ENCODE measurements at regions of chr4 and their contacts with region 1.

Region 1: GRCh38 chr4:82851885-82852750 is 38.8 kb downstream of the SEC31A start:
- DNase-seq: no peak
- ATAC-seq: peak; percentile 53
- H3K4me3 Mint-ChIP-seq: no peak overlapping the region
- H3K27ac Mint-ChIP-seq: no peak overlapping the region
- H3K4me1 Mint-ChIP-seq: peaks cover 5% of the 10 kb centered on the region
- H3K27me3 Mint-ChIP-seq: no peaks in the 10 kb centered on the region

Region 2: GRCh38 chr4:82865592-82865991 is 13.5 kb after region 1 on chr4:
- CTCF ChIA-PET with region 1: interaction called, 33 read pairs
- DNase-seq: peak; percentile 49
- ATAC-seq: peak; percentile 73
- H3K4me3 Mint-ChIP-seq: peak overlapping the region; percentile 7
- H3K27ac Mint-ChIP-seq: peak overlapping the region; percentile 86
- H3K4me1 Mint-ChIP-seq: peaks cover 39% of the 10 kb centered on the region
- H3K27me3 Mint-ChIP-seq: no peaks in the 10 kb centered on the region

Region 3: GRCh38 chr4:82900331-82901128 is 48.4 kb after region 1 on chr4 and contains the start of gene THAP9:
- CTCF ChIA-PET with region 1: interaction called, 32 read pairs
- DNase-seq: peak; percentile 100
- ATAC-seq: peak; percentile 91
- H3K4me3 Mint-ChIP-seq: no peak within 1 kb of the TSS
- H3K27ac Mint-ChIP-seq: no peak within 1 kb of the TSS
- H3K4me1 Mint-ChIP-seq: peaks cover 46% of the 10 kb centered on the region
- H3K27me3 Mint-ChIP-seq: peaks cover 5% of the 10 kb centered on the region
- total RNA-seq, gene THAP9: 1.9 to 2.4 TPM

Region 4: GRCh38 chr4:83054928-83055327 is 202.8 kb after region 1 on chr4:
- CTCF ChIA-PET with region 1: no interaction called
- DNase-seq: no peak
- ATAC-seq: no peak
- H3K4me3 Mint-ChIP-seq: no peak overlapping the region
- H3K27ac Mint-ChIP-seq: no peak overlapping the region
- H3K4me1 Mint-ChIP-seq: peaks cover 2% of the 10 kb centered on the region
- H3K27me3 Mint-ChIP-seq: no peaks in the 10 kb centered on the region

Region 5: GRCh38 chr4:83174844-83175414 is 322.8 kb after region 1 on chr4:
- CTCF ChIA-PET with region 1: no interaction called
- DNase-seq: no peak
- ATAC-seq: no peak
- H3K4me3 Mint-ChIP-seq: no peak overlapping the region
- H3K27ac Mint-ChIP-seq: no peak overlapping the region
- H3K4me1 Mint-ChIP-seq: peaks cover 10% of the 10 kb centered on the region
- H3K27me3 Mint-ChIP-seq: peaks cover 6% of the 10 kb centered on the region

Measured in activated CD8-positive, alpha-beta memory T cell treated with anti-CD3 and anti-CD28 coated beads, Interleukin-2, amount 10 ng/mL, durations not matched to agents 7 days and 5 days (primary cell).